ENCODE measurements at regions of chr3 and their contacts with region 1.

Region 1: GRCh38 chr3:169966428-169966950 is at the start of gene SEC62:
- DNase-seq: peak; percentile 92 to 97 (median 94)
- ATAC-seq: peak; percentile 84
- H3K4me3 ChIP-seq: peak within 1 kb of the TSS; percentile 66
- H3K4me3 Mint-ChIP-seq: peak within 1 kb of the TSS; percentile 99
- H3K27ac ChIP-seq: peak within 1 kb of the TSS; percentile 84 to 92
- H3K27ac Mint-ChIP-seq: peak within 1 kb of the TSS; percentile 99
- H3K4me1 ChIP-seq: peaks cover 18% of the 10 kb centered on the region
- H3K4me1 Mint-ChIP-seq: peaks cover 78% of the 10 kb centered on the region
- H3K27me3 ChIP-seq: no peaks in the 10 kb centered on the region
- H3K27me3 Mint-ChIP-seq: no peaks in the 10 kb centered on the region
- CTCF ChIP-seq: no peak
- total RNA-seq, gene SEC62: 113 to 117 TPM

Region 2: DNA sequence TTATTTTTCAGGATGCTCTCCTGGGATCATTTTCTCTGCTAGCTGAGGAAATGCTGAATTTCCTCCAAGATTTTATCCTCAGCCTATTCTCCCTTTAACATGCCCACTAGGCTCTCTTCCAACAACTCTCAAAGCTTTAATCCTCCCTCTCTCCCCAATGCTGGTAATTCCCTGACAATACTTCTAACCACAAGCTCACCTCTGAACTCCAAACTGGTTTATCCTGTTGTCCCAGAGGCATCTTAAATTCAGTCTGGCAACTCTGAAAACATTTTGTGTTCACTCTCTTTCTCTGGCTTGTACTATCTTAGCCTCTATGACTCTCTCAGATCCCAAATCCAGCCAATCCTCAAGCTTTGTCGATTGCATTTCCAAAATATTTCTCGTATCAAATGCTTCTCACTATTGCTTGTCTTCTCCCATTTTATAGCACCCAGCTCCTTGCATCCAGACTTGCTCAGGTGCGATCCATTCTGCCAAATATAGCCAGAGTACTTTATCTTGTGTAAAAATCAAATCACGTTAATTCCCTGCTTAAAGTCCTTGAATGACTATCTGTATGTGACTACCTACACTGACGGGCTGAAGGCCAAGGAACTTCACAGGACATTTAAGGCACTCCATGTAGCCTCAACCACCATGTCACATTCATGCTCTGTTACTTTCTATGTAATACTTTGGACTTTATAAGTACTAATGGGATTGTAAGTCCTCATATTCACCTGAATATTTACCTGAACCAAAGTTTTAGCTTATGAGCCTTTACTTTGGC is 793.1 kb before region 1 on chr3:
- CTCF ChIA-PET with region 1: no interaction called
- POLR2A ChIA-PET with region 1: no interaction called
- intact Hi-C with region 1: no loop called
- DNase-seq: no peak
- ATAC-seq: no peak
- H3K4me3 ChIP-seq: no peak overlapping the region
- H3K4me3 Mint-ChIP-seq: no peak overlapping the region
- H3K27ac ChIP-seq: no peak overlapping the region
- H3K27ac Mint-ChIP-seq: no peak overlapping the region
- H3K4me1 ChIP-seq: no peaks in the 10 kb centered on the region
- H3K4me1 Mint-ChIP-seq: no peaks in the 10 kb centered on the region
- H3K27me3 ChIP-seq: no peaks in the 10 kb centered on the region
- H3K27me3 Mint-ChIP-seq: peaks cover 19% of the 10 kb centered on the region
- CTCF ChIP-seq: no peak

Region 3: GRCh38 chr3:169641167-169641566 is 325.3 kb before region 1 on chr3:
- CTCF ChIA-PET with region 1: no interaction called
- POLR2A ChIA-PET with region 1: no interaction called
- intact Hi-C with region 1: no loop called
- DNase-seq: no peak
- ATAC-seq: no peak
- H3K4me3 ChIP-seq: no peak overlapping the region
- H3K4me3 Mint-ChIP-seq: no peak overlapping the region
- H3K27ac ChIP-seq: no peak overlapping the region
- H3K27ac Mint-ChIP-seq: no peak overlapping the region
- H3K4me1 ChIP-seq: no peaks in the 10 kb centered on the region
- H3K4me1 Mint-ChIP-seq: no peaks in the 10 kb centered on the region
- H3K27me3 ChIP-seq: peaks cover 0 to 16% of the 10 kb centered on the region in 2 experiments
- H3K27me3 Mint-ChIP-seq: peaks cover 52% of the 10 kb centered on the region
- CTCF ChIP-seq: no peak

Region 4: GRCh38 chr3:169764452-169765274 is 201.8 kb before region 1 on chr3 and contains the start of gene TERC:
- CTCF ChIA-PET with region 1: interaction called, 5 read pairs
- POLR2A ChIA-PET with region 1: interaction called, 50 read pairs
- intact Hi-C with region 1: loop called (anchors 2 to 5 kb)
- DNase-seq: peak; percentile 82 to 98 (median 92)
- ATAC-seq: peak; percentile 82
- H3K4me3 ChIP-seq: peak within 1 kb of the TSS; percentile 93
- H3K4me3 Mint-ChIP-seq: peak within 1 kb of the TSS; percentile 98
- H3K27ac ChIP-seq: peak within 1 kb of the TSS; percentile 95 to 96
- H3K27ac Mint-ChIP-seq: peak within 1 kb of the TSS; percentile 97
- H3K4me1 ChIP-seq: peaks cover 27% of the 10 kb centered on the region
- H3K4me1 Mint-ChIP-seq: peaks cover 38% of the 10 kb centered on the region
- H3K27me3 ChIP-seq: no peaks in the 10 kb centered on the region
- H3K27me3 Mint-ChIP-seq: no peaks in the 10 kb centered on the region
- CTCF ChIP-seq: no peak
- total RNA-seq, gene TERC: 9.0 to 10.4 TPM

Region 5: DNA sequence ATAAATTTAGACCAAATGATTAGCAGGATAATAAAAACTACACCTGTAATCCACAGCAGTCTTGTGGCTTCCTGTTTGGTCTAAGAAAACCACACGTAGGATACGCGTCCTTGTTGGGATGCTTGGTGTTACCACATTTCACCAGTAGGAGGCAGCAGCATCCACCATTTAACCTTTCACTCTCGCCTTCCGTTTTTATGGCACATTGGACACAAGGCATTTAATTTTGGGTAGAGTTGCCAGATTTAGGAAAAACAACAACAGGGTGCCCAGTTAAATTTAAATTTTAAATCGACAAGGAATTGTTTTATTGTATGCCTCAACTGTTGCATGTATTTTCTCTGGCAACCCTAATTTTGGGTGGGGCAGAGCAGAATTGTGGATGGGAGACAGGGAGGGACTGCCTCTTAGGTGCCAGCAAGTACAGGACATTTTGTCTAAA is 103.0 kb before region 1 on chr3:
- CTCF ChIA-PET with region 1: interaction called, 3 read pairs
- POLR2A ChIA-PET with region 1: interaction called, 34 read pairs
- intact Hi-C with region 1: loop called (anchors 1 to 5 kb)
- DNase-seq: peak; percentile 43 to 87 (median 52)
- ATAC-seq: peak; percentile 81
- H3K4me3 ChIP-seq: no peak overlapping the region
- H3K4me3 Mint-ChIP-seq: no peak overlapping the region
- H3K27ac ChIP-seq: no peak overlapping the region
- H3K27ac Mint-ChIP-seq: no peak overlapping the region
- H3K4me1 ChIP-seq: peaks cover 19% of the 10 kb centered on the region
- H3K4me1 Mint-ChIP-seq: peaks cover 29% of the 10 kb centered on the region
- H3K27me3 ChIP-seq: no peaks in the 10 kb centered on the region
- H3K27me3 Mint-ChIP-seq: peaks cover 5% of the 10 kb centered on the region
- CTCF ChIP-seq: peak; percentile 98

Region 6: GRCh38 chr3:169980055-169980454 is 13.6 kb after region 1 on chr3:
- CTCF ChIA-PET with region 1: interaction called, 4 read pairs
- POLR2A ChIA-PET with region 1: interaction called, 34 read pairs
- intact Hi-C with region 1: no loop called
- DNase-seq: no peak
- ATAC-seq: no peak
- H3K4me3 ChIP-seq: no peak overlapping the region
- H3K4me3 Mint-ChIP-seq: no peak overlapping the region
- H3K27ac ChIP-seq: no peak overlapping the region
- H3K27ac Mint-ChIP-seq: no peak overlapping the region
- H3K4me1 ChIP-seq: no peaks in the 10 kb centered on the region
- H3K4me1 Mint-ChIP-seq: peaks cover 10% of the 10 kb centered on the region
- H3K27me3 ChIP-seq: no peaks in the 10 kb centered on the region
- H3K27me3 Mint-ChIP-seq: no peaks in the 10 kb centered on the region
- CTCF ChIP-seq: no peak

Region 7: DNA sequence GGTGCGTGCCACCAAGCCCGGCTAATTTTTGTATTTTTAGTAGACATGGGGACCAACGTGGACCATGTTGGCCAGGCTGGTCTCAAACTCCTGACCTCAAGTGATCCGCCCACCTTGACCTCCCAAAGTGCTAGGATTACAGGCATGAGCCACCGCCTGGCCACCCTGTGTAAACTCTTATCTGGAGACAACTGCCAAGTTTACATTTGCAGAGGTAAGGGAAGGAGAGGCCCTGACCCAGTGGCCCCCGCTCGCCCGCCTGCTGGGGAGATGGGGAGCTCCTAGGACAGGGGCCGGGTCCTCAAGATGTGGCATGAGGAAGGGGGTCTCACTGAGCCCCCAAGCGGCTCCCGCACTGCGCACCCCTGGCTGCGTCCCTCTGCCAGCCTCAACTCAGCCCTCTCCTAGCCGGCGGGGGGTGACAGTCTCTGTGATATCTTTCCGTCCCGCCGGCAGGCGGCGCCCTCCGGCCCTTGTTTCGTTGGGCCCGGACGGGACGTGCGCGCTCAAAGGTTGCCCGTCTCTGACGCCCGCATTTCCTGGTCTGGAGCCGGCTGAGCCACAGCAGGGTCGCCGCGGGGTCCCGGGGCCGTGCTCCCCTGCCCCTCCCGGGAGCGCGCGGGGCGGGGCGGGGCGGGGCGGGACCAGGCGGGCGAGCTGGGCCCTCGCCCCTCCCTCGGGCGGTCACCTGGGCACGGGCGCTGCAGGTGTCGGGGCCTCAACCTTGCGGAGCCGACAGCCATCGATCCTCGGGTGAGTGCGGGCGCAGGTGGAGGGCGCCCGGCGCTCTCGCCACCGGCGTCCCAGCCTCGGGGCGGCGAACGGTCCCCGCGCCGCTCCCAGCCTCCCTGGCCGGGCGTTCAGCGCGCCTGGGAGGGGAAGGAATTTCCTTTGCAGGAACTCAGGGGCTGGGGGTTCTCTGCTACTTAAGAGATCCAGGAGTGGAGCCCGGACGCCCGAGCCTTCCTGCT is 71.3 kb after region 1 on chr3 and contains the start of gene GPR160:
- CTCF ChIA-PET with region 1: interaction called, 3 read pairs
- POLR2A ChIA-PET with region 1: interaction called, 27 read pairs
- intact Hi-C with region 1: loop called (anchors 2 to 5 kb)
- DNase-seq: peak; percentile 67 to 89 (median 74)
- ATAC-seq: peak; percentile 64
- H3K4me3 ChIP-seq: peak within 1 kb of the TSS; percentile 83
- H3K4me3 Mint-ChIP-seq: peak within 1 kb of the TSS; percentile 93
- H3K27ac ChIP-seq: peak within 1 kb of the TSS in 1 of 2 donors; percentile 41
- H3K27ac Mint-ChIP-seq: peak within 1 kb of the TSS; percentile 67
- H3K4me1 ChIP-seq: peaks cover 43% of the 10 kb centered on the region
- H3K4me1 Mint-ChIP-seq: peaks cover 43% of the 10 kb centered on the region
- H3K27me3 ChIP-seq: no peaks in the 10 kb centered on the region
- H3K27me3 Mint-ChIP-seq: no peaks in the 10 kb centered on the region
- CTCF ChIP-seq: peak; percentile 85
- total RNA-seq, gene GPR160: 5.7 TPM

Region 8: DNA sequence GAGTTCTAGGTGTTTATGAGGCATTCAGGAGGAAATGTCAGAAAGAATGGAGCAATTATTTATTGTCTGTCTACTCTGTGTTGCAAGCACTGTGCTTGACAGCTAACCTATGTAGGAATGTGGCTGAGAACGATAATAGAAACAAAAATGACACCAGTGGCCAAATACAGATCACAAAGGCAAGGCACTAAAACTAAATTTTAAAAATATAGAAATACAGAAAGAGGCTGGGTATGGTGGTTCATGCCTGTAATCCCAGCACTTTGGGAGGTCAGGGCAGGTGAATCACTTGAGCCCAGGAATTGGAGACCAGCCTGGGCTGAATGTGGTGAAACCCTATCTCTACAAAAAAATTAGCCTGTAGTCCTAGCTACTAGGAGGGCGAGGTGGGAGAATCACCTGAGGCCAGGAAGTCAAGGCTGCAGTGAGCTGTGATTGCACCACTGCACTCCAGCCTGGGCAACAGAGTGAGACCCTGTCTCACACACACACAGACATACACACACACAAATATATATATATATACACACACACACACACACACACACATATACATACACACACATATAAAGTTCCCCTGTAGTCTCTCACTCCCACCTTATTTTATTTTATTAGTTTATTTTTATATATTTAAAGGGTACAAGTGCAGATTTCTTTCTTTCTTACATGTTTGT is 261.7 kb after region 1 on chr3:
- CTCF ChIA-PET with region 1: no interaction called
- POLR2A ChIA-PET with region 1: no interaction called
- intact Hi-C with region 1: loop called in 1 of 2 experiments (anchors 5 kb)
- DNase-seq: no peak
- ATAC-seq: no peak
- H3K4me3 ChIP-seq: no peak overlapping the region
- H3K4me3 Mint-ChIP-seq: no peak overlapping the region
- H3K27ac ChIP-seq: no peak overlapping the region
- H3K27ac Mint-ChIP-seq: no peak overlapping the region
- H3K4me1 ChIP-seq: peaks cover 5% of the 10 kb centered on the region
- H3K4me1 Mint-ChIP-seq: peaks cover 38% of the 10 kb centered on the region
- H3K27me3 ChIP-seq: no peaks in the 10 kb centered on the region
- H3K27me3 Mint-ChIP-seq: no peaks in the 10 kb centered on the region
- CTCF ChIP-seq: no peak